Head of caudate nucleus (tissue), 42 donors: ENCODE measurements at regions of chr3 and their contacts with region 1.

Region 1: GRCh38 chr3:16884748-16885592 is at the start of gene PLCL2:
- DNase-seq: peak in 40 of 42 donors; percentile 24 to 80 (median 60)

Region 2: GRCh38 chr3:17032407-17033034 is 147.6 kb after region 1 on chr3:
- intact Hi-C with region 1: loop called (anchors 5 kb)
- DNase-seq: peak in 7 of 42 donors; percentile 23 to 60 (median 35)